Vagina (tissue), 2 donors: ENCODE measurements at regions of chr1 and their contacts with region 1.

Region 1: GRCh38 chr1:214331827-214332423 is 51.0 kb downstream of the SMYD2 start:
- DNase-seq: no peak
- H3K4me3 ChIP-seq: no peak overlapping the region
- H3K27ac ChIP-seq: no peak overlapping the region
- H3K4me1 ChIP-seq: peaks cover 18% of the 10 kb centered on the region
- H3K27me3 ChIP-seq: no peaks in the 10 kb centered on the region
- CTCF ChIP-seq: peak in 1 of 3 experiments; percentile 50
- POLR2A ChIP-seq: no peak

Region 2: DNA sequence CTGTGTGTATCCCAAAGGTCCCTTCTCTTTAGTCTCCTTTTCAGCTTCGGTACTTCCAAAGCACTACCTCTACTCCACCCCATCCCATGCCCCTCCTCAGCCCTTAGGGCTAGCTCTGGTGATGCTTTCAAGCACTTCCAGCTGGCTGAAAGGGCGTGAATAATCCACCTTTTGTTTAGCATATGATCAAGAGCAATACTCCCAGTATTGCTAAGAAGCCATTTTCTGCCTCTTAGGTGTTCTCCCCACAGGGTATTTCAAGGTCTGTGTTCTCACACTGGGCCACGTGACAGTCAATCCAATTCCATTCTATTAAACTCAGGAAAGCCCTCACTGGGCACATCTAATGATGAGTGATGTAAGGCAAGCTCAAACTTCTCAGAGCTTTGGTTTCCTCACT is 642.7 kb before region 1 on chr1:
- intact Hi-C with region 1: no loop called
- DNase-seq: no peak
- H3K4me3 ChIP-seq: no peak overlapping the region
- H3K27ac ChIP-seq: no peak overlapping the region
- H3K4me1 ChIP-seq: no peaks in the 10 kb centered on the region
- H3K27me3 ChIP-seq: no peaks in the 10 kb centered on the region
- CTCF ChIP-seq: no peak
- POLR2A ChIP-seq: no peak

Region 3: GRCh38 chr1:214261206-214262123 is 70.5 kb before region 1 on chr1:
- intact Hi-C with region 1: loop called (anchors 5 kb)
- DNase-seq: no peak
- H3K4me3 ChIP-seq: no peak overlapping the region
- H3K27ac ChIP-seq: no peak overlapping the region
- H3K4me1 ChIP-seq: peaks cover 6% of the 10 kb centered on the region
- H3K27me3 ChIP-seq: no peaks in the 10 kb centered on the region
- CTCF ChIP-seq: peak; percentile 82 to 96 (median 85)
- POLR2A ChIP-seq: no peak

Region 4: DNA sequence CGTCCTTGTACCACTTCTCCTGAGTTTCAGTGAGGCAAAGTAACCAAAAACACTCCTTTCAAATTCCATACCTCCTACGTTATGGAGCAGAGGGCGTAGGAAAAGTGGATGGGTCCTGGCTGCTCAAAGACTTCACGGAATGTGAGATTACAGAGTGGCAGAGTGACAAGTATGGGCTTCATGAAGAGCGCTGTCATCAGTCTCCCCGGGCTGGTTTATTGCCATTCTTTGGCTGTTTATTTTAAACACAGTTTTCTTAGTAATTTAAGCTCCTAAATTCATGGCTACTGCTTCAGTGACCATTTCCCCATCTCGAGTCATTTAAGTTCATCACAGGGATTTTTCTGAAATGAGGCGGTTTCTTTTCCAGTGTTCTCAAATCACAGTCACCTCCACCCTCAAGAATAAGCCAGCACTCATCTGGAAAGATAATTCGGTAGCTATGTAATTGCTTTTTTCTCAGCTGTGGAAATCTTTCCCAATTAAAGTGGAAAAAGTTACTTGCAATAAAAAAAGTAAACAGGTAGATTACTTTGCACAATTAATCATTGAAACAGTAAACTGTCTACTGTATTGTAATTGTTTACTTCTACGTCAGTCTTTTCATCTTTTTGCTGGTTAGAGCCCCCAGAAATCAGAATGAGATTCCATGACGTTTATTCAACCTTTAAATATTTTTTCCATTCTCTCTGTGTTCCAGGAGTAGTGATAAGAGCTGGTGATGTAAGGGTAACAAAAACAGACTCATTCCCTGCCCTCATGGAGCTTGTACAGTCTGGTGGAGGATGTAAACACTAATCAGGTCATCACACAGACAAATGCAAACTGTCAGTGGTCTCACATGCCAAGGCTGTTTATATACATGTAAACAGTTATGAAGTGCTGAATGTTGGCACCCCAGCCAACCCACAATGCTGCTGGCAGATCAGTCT is 54.0 kb before region 1 on chr1:
- intact Hi-C with region 1: no loop called
- DNase-seq: no peak
- H3K4me3 ChIP-seq: no peak overlapping the region
- H3K27ac ChIP-seq: no peak overlapping the region
- H3K4me1 ChIP-seq: peaks cover 19% of the 10 kb centered on the region
- H3K27me3 ChIP-seq: no peaks in the 10 kb centered on the region
- CTCF ChIP-seq: no peak
- POLR2A ChIP-seq: no peak

Region 5: DNA sequence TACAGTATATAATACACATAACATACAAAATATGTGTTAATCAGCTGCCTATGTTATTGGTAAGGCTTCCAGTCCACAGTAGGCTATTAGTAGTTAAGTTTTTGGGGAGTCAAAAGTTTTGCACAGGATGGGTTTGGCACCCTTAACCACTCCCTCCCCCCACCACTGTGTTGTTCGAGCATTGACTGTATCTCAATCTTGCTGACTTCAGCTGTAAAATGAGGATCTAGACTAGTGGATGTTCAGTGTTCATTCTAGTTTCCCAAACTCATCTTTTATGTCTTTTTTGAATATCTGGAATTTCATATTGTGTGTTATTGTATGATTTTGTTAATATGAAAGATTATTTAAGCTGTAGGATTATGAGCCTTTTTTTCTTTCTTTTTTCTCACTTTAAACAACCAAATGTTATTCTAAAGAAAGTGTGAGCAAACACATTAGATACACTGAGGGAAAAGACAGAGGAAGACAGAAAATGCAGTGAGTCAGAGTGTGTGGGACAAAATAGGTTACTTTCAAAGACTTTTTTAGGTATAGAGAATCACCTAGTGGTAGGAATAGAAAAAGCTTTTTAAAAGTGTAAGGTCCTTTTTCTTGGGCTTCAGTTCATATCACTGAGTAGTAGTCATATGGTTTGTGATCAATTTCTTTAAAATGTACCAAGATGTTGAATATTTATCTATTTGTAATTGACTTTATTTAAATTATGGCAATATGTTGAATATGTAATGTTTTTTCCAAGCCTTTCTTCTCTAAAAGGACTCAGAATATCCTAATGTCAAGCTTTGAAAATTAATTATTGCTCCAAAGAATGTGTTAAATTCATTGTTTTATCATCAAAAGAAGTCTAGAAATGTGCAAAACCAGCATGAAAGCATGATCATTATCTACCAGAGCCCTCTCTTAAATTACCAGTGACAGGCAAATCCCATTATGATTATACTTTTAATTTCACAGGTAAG is 253.2 kb after region 1 on chr1:
- intact Hi-C with region 1: loop called (anchors 5 kb)
- DNase-seq: no peak
- H3K4me3 ChIP-seq: no peak overlapping the region
- H3K27ac ChIP-seq: no peak overlapping the region
- H3K4me1 ChIP-seq: peaks cover 17% of the 10 kb centered on the region
- H3K27me3 ChIP-seq: no peaks in the 10 kb centered on the region
- CTCF ChIP-seq: peak; percentile 27 to 64 (median 37)
- POLR2A ChIP-seq: no peak